Activated CD4-positive, alpha-beta T cell treated with anti-CD3 and anti-CD28 coated beads, Interleukin-2, amount 10 ng/mL, durations not matched to agents 7 days and 5 days (primary cell): ENCODE measurements at regions of chr12 and their contacts with region 1.

Region 1: GRCh38 chr12:47828608-47829536 is 9.2 kb upstream of the HDAC7 start:
- DNase-seq: no peak
- H3K4me3 Mint-ChIP-seq: peak overlapping the region; percentile 28
- H3K27ac Mint-ChIP-seq: peak overlapping the region; percentile 77
- H3K4me1 Mint-ChIP-seq: peaks cover 92% of the 10 kb centered on the region
- H3K27me3 Mint-ChIP-seq: no peaks in the 10 kb centered on the region

Region 2: GRCh38 chr12:47750996-47751960 is 77.6 kb before region 1 on chr12:
- CTCF ChIA-PET with region 1: no interaction called
- POLR2A ChIA-PET with region 1: no interaction called
- DNase-seq: no peak
- H3K4me3 Mint-ChIP-seq: no peak overlapping the region
- H3K27ac Mint-ChIP-seq: no peak overlapping the region
- H3K4me1 Mint-ChIP-seq: peaks cover 15% of the 10 kb centered on the region
- H3K27me3 Mint-ChIP-seq: no peaks in the 10 kb centered on the region

Region 3: DNA sequence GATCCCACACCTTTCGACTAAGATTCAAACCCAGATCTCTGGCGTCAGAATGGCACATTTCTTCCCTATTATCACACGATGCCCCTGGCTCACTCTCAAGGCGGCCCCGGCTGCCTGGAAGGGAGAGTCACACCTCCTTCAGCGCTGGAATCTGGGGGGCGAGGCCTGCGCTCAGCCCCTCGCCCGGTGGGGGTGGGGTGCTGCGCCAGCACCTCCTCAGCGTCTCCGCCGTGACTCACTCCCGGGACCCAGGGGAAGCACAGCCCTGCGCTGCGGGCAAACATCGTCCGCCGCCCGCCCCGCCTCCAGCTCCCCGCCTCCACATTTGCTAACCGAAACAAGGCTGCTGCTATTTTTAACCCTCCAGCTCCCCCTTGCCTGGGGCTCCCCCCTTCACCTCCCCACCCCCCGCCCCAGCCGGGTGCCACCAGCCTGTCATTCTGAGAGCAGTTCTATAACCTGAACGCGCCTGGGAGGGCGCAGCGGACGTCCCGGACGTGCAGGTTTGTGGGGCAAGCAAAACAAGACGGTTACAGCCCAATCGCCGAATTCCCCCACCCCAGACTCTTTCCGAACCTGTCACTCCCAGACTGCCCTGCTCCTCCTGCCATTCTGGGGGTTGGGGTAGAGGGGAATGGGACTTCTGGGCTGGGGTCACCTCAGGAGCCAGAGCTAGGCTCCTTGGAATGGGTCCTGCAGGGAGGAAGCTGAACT is 15.9 kb before region 1 on chr12:
- CTCF ChIA-PET with region 1: interaction called, 309 read pairs
- POLR2A ChIA-PET with region 1: interaction called, 18 read pairs
- DNase-seq: peak; percentile 95
- H3K4me3 Mint-ChIP-seq: peak overlapping the region; percentile 94
- H3K27ac Mint-ChIP-seq: peak overlapping the region; percentile 97
- H3K4me1 Mint-ChIP-seq: peaks cover 94% of the 10 kb centered on the region
- H3K27me3 Mint-ChIP-seq: no peaks in the 10 kb centered on the region